GM12878 (cell line): ENCODE measurements at regions of chr14 and their contacts with region 1.

Region 1: GRCh38 chr14:34227834-34228649 is 234.0 kb downstream of the SPTSSA start:
- DNase-seq: no peak
- ATAC-seq: peak; percentile 96
- H3K4me3 ChIP-seq: no peak overlapping the region
- H3K27ac ChIP-seq: no peak overlapping the region
- H3K4me1 ChIP-seq: no peaks in the 10 kb centered on the region
- H3K27me3 ChIP-seq: peaks cover 0 to 2% of the 10 kb centered on the region in 2 experiments; a peak in 1 of 4 replicates
- CTCF ChIP-seq: peak; percentile 71 to 78 (median 72); a peak in 5 of 6 replicates
- EP300 ChIP-seq: no peak
- POLR2A ChIP-seq: no peak
- RAD21 ChIP-seq: peak; percentile 81

Region 2: GRCh38 chr14:33938131-33938949 is 289.7 kb before region 1 on chr14:
- CTCF ChIA-PET with region 1: no interaction called
- POLR2A ChIA-PET with region 1: no interaction called
- RAD21 ChIA-PET with region 1: no interaction called
- SMC1A ChIA-PET with region 1: interaction called, 11 read pairs
- in situ Hi-C with region 1: no loop called
- intact Hi-C with region 1: no loop called
- DNase-seq: peak; percentile 36
- ATAC-seq: no peak
- H3K4me3 ChIP-seq: no peak overlapping the region; the same call in 1 of the 2 replicates
- H3K27ac ChIP-seq: no peak overlapping the region
- H3K4me1 ChIP-seq: no peaks in the 10 kb centered on the region
- H3K27me3 ChIP-seq: no peaks in the 10 kb centered on the region
- CTCF ChIP-seq: no peak
- EP300 ChIP-seq: no peak
- POLR2A ChIP-seq: no peak
- RAD21 ChIP-seq: no peak

Region 3: DNA sequence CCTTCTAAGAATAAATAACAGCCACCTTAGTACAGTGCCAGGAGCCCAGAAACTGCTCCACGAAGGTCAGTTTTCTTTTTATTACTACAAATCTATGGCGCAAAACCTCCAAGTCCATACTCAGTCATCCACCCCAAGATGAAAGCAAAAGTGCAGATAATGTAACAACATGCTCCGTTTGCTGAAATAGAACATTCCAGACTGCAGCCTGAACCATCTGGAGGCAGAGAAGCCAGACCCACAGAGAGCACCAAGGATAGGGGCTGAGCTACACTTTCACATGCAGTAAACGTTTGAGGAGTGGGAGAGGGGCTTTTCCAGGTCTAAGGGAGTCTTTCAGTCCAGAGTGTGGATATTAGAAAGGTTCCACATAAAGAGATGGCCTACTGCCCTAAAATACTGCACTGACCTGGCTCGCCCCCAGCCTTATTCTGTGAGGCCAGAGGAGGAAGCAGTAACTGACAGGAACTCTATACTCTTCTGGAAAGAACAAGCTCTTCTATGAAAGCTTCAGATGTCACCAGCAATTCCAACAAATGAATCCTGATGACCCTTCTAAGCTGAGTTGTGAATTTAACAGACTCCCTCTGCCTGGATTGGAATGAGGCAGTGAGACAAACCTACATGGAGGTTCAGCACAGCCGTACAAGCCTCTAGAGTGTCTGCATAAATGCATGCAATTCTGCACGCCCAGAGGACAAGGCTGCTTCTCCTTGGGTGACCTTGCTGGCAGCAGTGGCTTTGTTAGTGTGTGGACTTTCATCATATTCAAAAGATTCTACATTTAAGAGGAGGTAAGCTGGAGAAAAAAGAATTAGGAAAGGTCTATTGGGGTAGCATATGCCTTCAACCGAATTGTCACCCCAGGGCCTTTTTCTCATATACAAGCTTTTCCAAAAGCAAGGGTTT is 123.3 kb before region 1 on chr14:
- CTCF ChIA-PET with region 1: interaction called, 101 read pairs
- POLR2A ChIA-PET with region 1: interaction called, 3 read pairs
- RAD21 ChIA-PET with region 1: interaction called, 62 read pairs
- SMC1A ChIA-PET with region 1: interaction called, 139 read pairs
- in situ Hi-C with region 1: no loop called
- intact Hi-C with region 1: loop called (anchors 2 kb)
- DNase-seq: no peak
- ATAC-seq: no peak
- H3K4me3 ChIP-seq: no peak overlapping the region
- H3K27ac ChIP-seq: no peak overlapping the region
- H3K4me1 ChIP-seq: no peaks in the 10 kb centered on the region
- H3K27me3 ChIP-seq: no peaks in the 10 kb centered on the region; a peak in 1 of 4 replicates
- CTCF ChIP-seq: no peak
- EP300 ChIP-seq: no peak
- POLR2A ChIP-seq: no peak
- RAD21 ChIP-seq: no peak

Region 4: DNA sequence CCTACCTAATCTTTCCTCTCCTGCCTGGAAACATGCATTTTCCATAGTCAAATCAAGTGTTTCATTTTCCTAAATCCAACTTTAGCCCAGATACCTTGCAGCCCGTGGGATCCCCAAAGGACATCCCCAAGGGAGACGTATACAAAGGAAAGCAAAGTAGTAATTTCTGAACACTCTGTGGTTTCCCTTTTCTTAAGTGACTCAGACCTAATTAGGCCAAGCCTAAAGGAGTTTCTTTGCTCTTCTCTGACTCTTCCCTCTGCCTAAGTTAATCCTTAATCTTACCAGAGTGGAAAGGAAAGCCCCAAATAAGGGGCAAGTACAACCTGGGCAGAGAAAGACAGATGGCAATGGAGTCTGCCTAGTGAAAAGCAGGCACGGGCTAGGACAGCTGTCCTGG is 16.3 kb before region 1 on chr14:
- CTCF ChIA-PET with region 1: interaction called, 10 read pairs
- POLR2A ChIA-PET with region 1: interaction called, 3 read pairs
- RAD21 ChIA-PET with region 1: interaction called, 6 read pairs
- SMC1A ChIA-PET with region 1: interaction called, 28 read pairs
- in situ Hi-C with region 1: no loop called
- intact Hi-C with region 1: no loop called
- DNase-seq: peak; percentile 45
- ATAC-seq: peak; percentile 91
- H3K4me3 ChIP-seq: no peak overlapping the region
- H3K27ac ChIP-seq: no peak overlapping the region
- H3K4me1 ChIP-seq: no peaks in the 10 kb centered on the region; the same call in 1 of the 2 replicates
- H3K27me3 ChIP-seq: no peaks in the 10 kb centered on the region; a peak in 1 of 4 replicates
- CTCF ChIP-seq: no peak
- EP300 ChIP-seq: peak; percentile 30 to 74; a peak in 2 of 4 replicates
- POLR2A ChIP-seq: no peak
- RAD21 ChIP-seq: no peak

Region 5: GRCh38 chr14:34300882-34301734 is 73.1 kb after region 1 on chr14:
- CTCF ChIA-PET with region 1: interaction called, 10 read pairs
- POLR2A ChIA-PET with region 1: interaction called, 3 read pairs
- RAD21 ChIA-PET with region 1: interaction called, 6 read pairs
- SMC1A ChIA-PET with region 1: no interaction called
- in situ Hi-C with region 1: no loop called
- intact Hi-C with region 1: no loop called
- DNase-seq: peak; percentile 7
- ATAC-seq: peak; percentile 67
- H3K4me3 ChIP-seq: no peak overlapping the region
- H3K27ac ChIP-seq: no peak overlapping the region
- H3K4me1 ChIP-seq: no peaks in the 10 kb centered on the region
- H3K27me3 ChIP-seq: no peaks in the 10 kb centered on the region
- CTCF ChIP-seq: peak; percentile 51 to 59 (median 56); a peak in 5 of 6 replicates
- EP300 ChIP-seq: no peak
- POLR2A ChIP-seq: no peak
- RAD21 ChIP-seq: peak; percentile 62